ENCODE measurements at regions of chr11 and their contacts with region 1.

Region 1: GRCh38 chr11:22304337-22304961 is 33.7 kb upstream of the SLC17A6 start:
- DNase-seq: no peak
- H3K4me3 Mint-ChIP-seq: no peak overlapping the region
- H3K27ac Mint-ChIP-seq: no peak overlapping the region
- H3K4me1 Mint-ChIP-seq: no peaks in the 10 kb centered on the region
- H3K27me3 Mint-ChIP-seq: peaks cover 3% of the 10 kb centered on the region

Region 2: GRCh38 chr11:22244986-22245592 is 59.4 kb before region 1 on chr11:
- CTCF ChIA-PET with region 1: interaction called, 18 read pairs
- POLR2A ChIA-PET with region 1: no interaction called
- intact Hi-C with region 1: loop called (anchors 1 kb)
- DNase-seq: peak; percentile 12
- H3K4me3 Mint-ChIP-seq: no peak overlapping the region
- H3K27ac Mint-ChIP-seq: no peak overlapping the region
- H3K4me1 Mint-ChIP-seq: no peaks in the 10 kb centered on the region
- H3K27me3 Mint-ChIP-seq: peaks cover 5% of the 10 kb centered on the region

Region 3: DNA sequence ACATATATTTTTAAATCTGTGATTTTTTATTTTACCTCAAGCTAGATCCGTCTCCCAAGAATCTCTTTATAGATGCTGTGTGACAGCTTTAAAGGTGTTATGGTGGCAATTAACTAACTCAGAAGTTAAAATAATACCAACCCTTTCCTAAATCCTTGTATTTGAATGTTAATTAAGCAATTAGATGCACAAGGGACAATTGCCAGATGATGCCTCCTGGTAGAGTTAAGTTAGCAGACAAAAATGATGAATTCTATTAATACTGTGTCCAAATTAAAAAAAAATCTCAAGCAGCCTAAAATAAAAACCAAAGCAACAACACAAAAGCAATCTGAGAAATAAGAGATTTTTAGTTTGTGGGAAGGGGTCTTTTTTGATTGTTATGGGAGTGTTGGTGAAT is 242.3 kb after region 1 on chr11:
- CTCF ChIA-PET with region 1: no interaction called
- POLR2A ChIA-PET with region 1: no interaction called
- intact Hi-C with region 1: no loop called
- DNase-seq: no peak
- H3K4me3 Mint-ChIP-seq: no peak overlapping the region
- H3K27ac Mint-ChIP-seq: no peak overlapping the region
- H3K4me1 Mint-ChIP-seq: no peaks in the 10 kb centered on the region
- H3K27me3 Mint-ChIP-seq: no peaks in the 10 kb centered on the region

Measured in activated CD4-positive, alpha-beta memory T cell treated with anti-CD3 and anti-CD28 coated beads for 36 hours (primary cell).